Activated T-helper 1 cell treated with anti-CD3 and anti-CD28 coated beads, Interleukin-12 subunit alpha, Interleukin-12 subunit beta, Interleukin-2, Interleukin-4 antibody, amounts not matched to agents 30 ng/mL and 10 ng/mL and 1 ng/mL, durations not matched to agents 14 hours and 24 hours and 36 hours (primary cell): ENCODE measurements at regions of chr15 and their contacts with region 1.

Region 1: GRCh38 chr15:40108855-40109735 is at the start of gene BMF:
- DNase-seq: peak; percentile 95
- H3K4me3 Mint-ChIP-seq: peak within 1 kb of the TSS; percentile 92
- H3K27ac Mint-ChIP-seq: peak within 1 kb of the TSS; percentile 87
- H3K4me1 Mint-ChIP-seq: peaks cover 51% of the 10 kb centered on the region
- H3K27me3 Mint-ChIP-seq: peaks cover 12% of the 10 kb centered on the region
- total RNA-seq, gene BMF: 10.1 and 16.5 TPM in 2 replicates

Region 2: GRCh38 chr15:38683382-38684242 is 1425.5 kb before region 1 on chr15:
- intact Hi-C with region 1: loop called (anchors 10 kb)
- DNase-seq: peak; percentile 57
- H3K4me3 Mint-ChIP-seq: peak overlapping the region; percentile 65
- H3K27ac Mint-ChIP-seq: peak overlapping the region; percentile 95
- H3K4me1 Mint-ChIP-seq: peaks cover 80% of the 10 kb centered on the region
- H3K27me3 Mint-ChIP-seq: no peaks in the 10 kb centered on the region

Region 3: GRCh38 chr15:39920510-39921273 is 188.4 kb before region 1 on chr15:
- intact Hi-C with region 1: no loop called
- DNase-seq: peak; percentile 71
- H3K4me3 Mint-ChIP-seq: peak overlapping the region; percentile 89
- H3K27ac Mint-ChIP-seq: peak overlapping the region; percentile 59
- H3K4me1 Mint-ChIP-seq: peaks cover 35% of the 10 kb centered on the region
- H3K27me3 Mint-ChIP-seq: peaks cover 30% of the 10 kb centered on the region

Region 4: GRCh38 chr15:39934397-39935071 is 174.6 kb before region 1 on chr15:
- intact Hi-C with region 1: loop called (anchors 5 kb)
- DNase-seq: no peak
- H3K4me3 Mint-ChIP-seq: peak overlapping the region; percentile 94
- H3K27ac Mint-ChIP-seq: peak overlapping the region; percentile 84
- H3K4me1 Mint-ChIP-seq: peaks cover 49% of the 10 kb centered on the region
- H3K27me3 Mint-ChIP-seq: no peaks in the 10 kb centered on the region

Region 5: DNA sequence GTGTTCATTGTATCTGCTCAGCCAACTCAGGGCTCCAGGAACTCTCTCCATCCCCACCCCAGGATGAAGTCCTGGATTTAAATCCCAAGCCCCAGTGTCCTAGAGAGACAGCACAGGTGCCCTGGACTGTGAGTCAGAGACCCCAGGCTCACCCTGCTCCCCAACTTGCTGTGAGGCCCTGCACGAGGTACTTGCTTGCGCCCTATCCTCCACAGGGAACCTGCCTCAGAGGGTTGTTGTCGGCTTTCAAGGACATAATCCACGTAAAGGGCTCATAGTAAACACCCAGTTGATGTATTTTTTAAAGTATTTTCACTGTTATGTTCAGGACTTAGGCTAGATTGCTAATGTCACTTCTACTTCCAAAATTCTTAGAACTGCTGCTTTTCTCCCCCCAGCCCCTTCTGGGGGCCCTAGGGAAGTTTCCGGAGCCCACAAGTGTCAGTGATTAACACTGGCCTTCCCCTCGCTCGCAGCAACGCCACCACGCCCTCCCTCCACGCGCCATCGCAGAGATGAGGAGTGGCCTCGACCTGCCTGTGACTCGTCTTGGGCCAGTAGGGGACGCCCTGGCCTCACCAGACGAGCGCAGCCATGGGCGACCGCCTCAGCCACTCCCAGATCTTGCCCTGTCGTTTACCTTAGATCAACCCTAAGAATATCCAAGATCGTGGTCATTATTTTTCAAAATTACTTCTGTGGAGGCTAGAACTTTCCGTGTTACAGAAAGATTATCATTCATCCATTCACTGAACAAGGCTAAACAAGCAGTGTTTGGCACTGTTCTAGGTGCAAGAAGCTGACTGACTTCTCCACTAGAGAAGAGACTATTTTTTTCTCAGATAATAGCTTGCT is 64.2 kb before region 1 on chr15:
- intact Hi-C with region 1: loop called (anchors 1 kb)
- DNase-seq: peak; percentile 77
- H3K4me3 Mint-ChIP-seq: peak overlapping the region; percentile 21
- H3K27ac Mint-ChIP-seq: peak overlapping the region; percentile 61
- H3K4me1 Mint-ChIP-seq: peaks cover 81% of the 10 kb centered on the region
- H3K27me3 Mint-ChIP-seq: no peaks in the 10 kb centered on the region

Region 6: GRCh38 chr15:40098489-40099261 is 10.4 kb before region 1 on chr15:
- intact Hi-C with region 1: loop called (anchors 1 kb)
- DNase-seq: peak; percentile 72
- H3K4me3 Mint-ChIP-seq: peak overlapping the region; percentile 74
- H3K27ac Mint-ChIP-seq: peak overlapping the region; percentile 99
- H3K4me1 Mint-ChIP-seq: peaks cover 87% of the 10 kb centered on the region
- H3K27me3 Mint-ChIP-seq: peaks cover 2% of the 10 kb centered on the region

Region 7: DNA sequence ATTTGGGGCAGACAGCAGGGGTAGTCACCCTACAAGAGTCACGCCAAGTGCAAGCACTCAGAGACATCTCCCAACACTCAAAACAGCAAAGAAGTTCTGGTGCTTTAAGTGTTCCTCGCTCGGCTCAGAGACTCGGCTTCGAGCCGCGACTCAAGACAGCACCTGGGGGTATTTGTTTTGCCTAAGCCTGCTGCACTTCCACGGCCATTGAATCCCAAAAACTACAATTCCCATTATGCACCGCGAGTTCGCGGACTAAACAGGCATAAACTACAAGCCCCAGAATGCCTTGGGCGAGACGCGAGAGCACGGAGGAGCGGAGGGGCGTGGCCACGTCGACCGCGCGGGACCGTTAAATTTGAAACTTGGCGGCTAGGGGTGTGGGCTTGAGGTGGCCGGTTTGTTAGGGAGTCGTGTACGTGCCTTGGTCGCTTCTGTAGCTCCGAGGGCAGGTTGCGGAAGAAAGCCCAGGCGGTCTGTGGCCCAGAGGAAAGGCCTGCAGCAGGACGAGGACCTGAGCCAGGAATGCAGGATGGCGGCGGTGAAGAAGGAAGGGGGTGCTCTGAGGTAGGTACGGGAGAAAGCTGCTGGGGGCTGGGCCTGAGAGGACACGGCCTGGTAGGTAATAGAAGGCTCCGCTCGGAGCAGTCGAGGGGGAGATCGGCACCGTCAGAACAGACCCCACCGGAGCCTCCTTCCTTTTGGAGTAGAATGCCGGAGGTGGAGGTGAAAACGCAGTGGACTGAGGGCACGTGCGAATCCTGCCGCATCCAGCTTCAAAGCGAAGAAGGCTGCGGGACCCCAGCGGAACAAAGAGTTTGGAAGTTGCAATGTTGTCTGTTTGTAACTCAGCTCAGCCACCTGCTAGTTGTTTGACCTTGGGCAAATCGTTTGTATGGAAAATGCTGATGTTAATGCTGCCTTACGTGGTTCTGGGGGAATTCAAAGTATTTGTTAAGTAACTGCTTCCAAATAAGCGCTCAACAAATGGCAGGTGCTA is 51.9 kb after region 1 on chr15 and contains the start of gene BUB1B:
- intact Hi-C with region 1: loop called (anchors 1 kb)
- DNase-seq: peak; percentile 93
- H3K4me3 Mint-ChIP-seq: no peak within 1 kb of the TSS
- H3K27ac Mint-ChIP-seq: no peak within 1 kb of the TSS
- H3K4me1 Mint-ChIP-seq: peaks cover 10% of the 10 kb centered on the region
- H3K27me3 Mint-ChIP-seq: no peaks in the 10 kb centered on the region
- total RNA-seq, gene BUB1B: 71.0 and 76.1 TPM in 2 replicates

Region 8: DNA sequence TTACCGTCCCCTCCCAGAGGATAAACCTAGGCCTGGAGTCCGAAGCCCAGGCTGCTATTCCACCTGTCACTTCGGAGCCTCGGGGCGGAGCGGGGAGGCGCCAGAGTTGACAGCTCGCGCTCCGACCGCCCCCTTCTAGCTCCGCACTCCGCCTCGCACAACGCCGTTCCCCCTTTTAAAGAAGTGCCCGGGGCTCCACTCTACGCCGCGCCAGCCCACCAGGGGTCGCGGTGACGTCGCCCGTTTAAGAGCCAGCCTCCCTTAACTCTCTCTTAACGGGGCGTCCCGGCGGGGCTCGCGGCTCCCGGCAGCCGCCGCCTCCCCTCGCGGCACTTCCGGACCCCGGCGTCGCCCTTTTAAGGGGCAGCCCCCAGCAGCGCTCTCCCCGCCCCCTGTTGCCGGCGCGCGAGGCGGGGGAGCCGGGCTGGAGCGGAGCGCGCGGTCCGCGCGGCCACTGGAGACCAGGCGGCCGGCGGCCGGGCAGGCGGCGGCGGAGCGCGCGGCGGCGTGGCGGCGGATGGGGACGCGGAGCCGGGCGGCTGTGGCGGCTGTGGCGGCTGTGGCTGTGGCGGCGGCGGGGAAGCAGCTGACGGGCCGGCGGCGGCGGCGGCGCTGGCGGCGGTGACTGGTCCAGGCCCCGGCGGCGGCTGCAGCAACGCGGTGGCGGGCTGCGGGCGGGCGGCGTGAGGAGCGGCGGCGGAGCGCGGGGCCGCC is 214.3 kb after region 1 on chr15 and contains the start of gene INAFM2:
- intact Hi-C with region 1: loop called (anchors 5 kb)
- DNase-seq: peak; percentile 83
- H3K4me3 Mint-ChIP-seq: peak within 1 kb of the TSS; percentile 83
- H3K27ac Mint-ChIP-seq: no peak within 1 kb of the TSS
- H3K4me1 Mint-ChIP-seq: peaks cover 52% of the 10 kb centered on the region
- H3K27me3 Mint-ChIP-seq: peaks cover 15% of the 10 kb centered on the region
- total RNA-seq, gene INAFM2: 19.2 and 25.1 TPM in 2 replicates